PC-9 (cell line): ENCODE measurements at regions of chr14 and their contacts with region 1.

Region 1: GRCh38 chr14:49585803-49586672 is at the start of gene RPS29:
- DNase-seq: peak; percentile 95 to 97
- H3K4me3 ChIP-seq: peak within 1 kb of the TSS; percentile 97
- H3K27ac ChIP-seq: peak within 1 kb of the TSS; percentile 85
- H3K4me1 ChIP-seq: peaks cover 32% of the 10 kb centered on the region
- H3K27me3 ChIP-seq: no peaks in the 10 kb centered on the region
- CTCF ChIP-seq: no peak
- total RNA-seq, gene RPS29: 1,018 and 1,294 TPM in 2 replicates

Region 2: DNA sequence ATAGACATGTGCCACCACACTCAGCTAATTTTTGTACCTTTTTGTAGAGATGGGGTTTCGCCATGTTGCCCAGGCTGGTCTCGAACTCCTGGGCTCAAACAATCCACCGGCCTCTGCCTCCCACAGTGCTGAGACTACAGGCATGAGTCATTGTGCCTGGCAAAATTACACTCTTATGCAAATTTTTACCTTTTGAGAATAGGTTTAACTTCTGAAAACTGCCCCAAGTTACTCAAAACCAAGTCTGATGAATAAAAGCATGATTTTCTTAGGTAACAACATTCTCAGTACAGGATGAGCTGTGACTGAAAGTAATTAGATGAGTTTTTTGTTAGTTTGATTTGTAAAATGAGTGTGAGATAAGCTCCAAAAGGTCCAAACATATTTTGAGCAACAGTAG is 165.8 kb before region 1 on chr14:
- CTCF ChIA-PET with region 1: no interaction called
- POLR2A ChIA-PET with region 1: no interaction called
- intact Hi-C with region 1: no loop called
- DNase-seq: no peak
- H3K4me3 ChIP-seq: no peak overlapping the region
- H3K27ac ChIP-seq: no peak overlapping the region
- H3K4me1 ChIP-seq: no peaks in the 10 kb centered on the region
- H3K27me3 ChIP-seq: no peaks in the 10 kb centered on the region
- CTCF ChIP-seq: no peak

Region 3: DNA sequence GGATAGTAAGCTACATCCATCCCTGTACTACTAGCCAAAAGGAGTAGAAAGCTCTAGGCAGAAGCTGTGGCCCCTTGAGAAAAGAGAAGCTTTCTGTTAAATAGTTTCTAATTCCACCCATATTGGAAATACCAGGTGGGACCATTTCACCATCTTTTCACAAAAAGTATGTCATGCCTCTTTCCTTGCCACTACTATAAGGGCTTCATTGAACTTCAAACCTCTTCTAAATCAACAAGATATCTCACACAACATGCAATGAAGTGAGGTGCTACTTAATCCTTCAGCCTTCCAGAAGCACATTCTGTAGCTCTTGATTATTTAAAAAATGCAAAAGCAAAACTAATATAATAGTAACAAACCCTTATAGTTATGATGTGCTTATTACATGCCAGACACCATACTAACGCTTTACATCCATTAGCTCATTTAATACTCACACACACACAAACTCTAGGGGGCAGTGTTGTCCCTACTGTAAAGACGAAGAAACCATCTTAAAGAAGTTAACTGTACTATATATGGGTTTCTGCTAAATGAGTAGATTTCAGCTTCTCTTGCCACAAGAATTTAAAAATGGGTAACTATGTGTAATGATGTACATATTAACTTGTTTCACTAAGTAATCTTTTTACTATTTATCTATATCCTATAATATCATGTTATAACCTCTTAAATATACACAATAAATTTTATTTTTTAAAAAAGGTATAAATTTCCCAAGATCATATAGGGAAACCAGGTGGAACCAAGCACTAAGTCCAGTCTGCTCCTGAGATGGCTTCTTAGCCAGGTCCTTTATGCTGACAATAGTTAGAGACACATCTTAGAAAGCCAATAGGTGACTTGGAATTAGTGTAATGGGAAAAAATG is 124.3 kb before region 1 on chr14:
- CTCF ChIA-PET with region 1: interaction called, 6 read pairs
- POLR2A ChIA-PET with region 1: no interaction called
- intact Hi-C with region 1: loop called (anchors 10 kb)
- DNase-seq: peak; percentile 43 to 67
- H3K4me3 ChIP-seq: no peak overlapping the region
- H3K27ac ChIP-seq: no peak overlapping the region
- H3K4me1 ChIP-seq: no peaks in the 10 kb centered on the region
- H3K27me3 ChIP-seq: no peaks in the 10 kb centered on the region
- CTCF ChIP-seq: peak; percentile 84

Region 4: GRCh38 chr14:49505041-49505766 is 80.8 kb before region 1 on chr14:
- CTCF ChIA-PET with region 1: no interaction called
- POLR2A ChIA-PET with region 1: no interaction called
- intact Hi-C with region 1: loop called (anchors 10 kb)
- DNase-seq: peak; percentile 77 to 99
- H3K4me3 ChIP-seq: no peak overlapping the region
- H3K27ac ChIP-seq: peak overlapping the region; percentile 90
- H3K4me1 ChIP-seq: peaks cover 31% of the 10 kb centered on the region
- H3K27me3 ChIP-seq: no peaks in the 10 kb centered on the region
- CTCF ChIP-seq: no peak

Region 5: DNA sequence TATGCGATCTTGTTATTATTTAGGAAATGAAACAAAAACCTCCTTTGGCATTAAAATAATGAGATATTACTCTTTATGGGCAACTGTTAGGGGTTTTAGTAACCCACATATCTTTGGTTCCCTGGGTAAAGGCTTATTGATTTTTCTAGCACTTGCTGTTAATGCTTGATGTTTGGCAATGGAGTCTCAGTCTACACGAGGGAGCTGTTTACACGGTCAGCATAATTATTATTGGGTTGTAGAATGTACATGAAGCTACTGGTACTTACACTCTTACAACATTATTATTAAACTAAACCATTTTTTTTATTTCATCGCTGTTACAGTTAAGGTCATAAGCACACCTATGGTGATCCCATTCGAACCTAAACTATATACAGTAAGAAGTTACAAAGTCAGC is 12.0 kb before region 1 on chr14:
- CTCF ChIA-PET with region 1: no interaction called
- POLR2A ChIA-PET with region 1: interaction called, 27 read pairs
- intact Hi-C with region 1: no loop called
- DNase-seq: no peak
- H3K4me3 ChIP-seq: no peak overlapping the region
- H3K27ac ChIP-seq: no peak overlapping the region
- H3K4me1 ChIP-seq: no peaks in the 10 kb centered on the region
- H3K27me3 ChIP-seq: no peaks in the 10 kb centered on the region
- CTCF ChIP-seq: no peak

Region 6: GRCh38 chr14:49620182-49621113 is 34.4 kb after region 1 on chr14 and contains the starts of genes MGAT2 and RPL36AL:
- CTCF ChIA-PET with region 1: interaction called, 3 read pairs
- POLR2A ChIA-PET with region 1: interaction called, 4 read pairs
- intact Hi-C with region 1: loop called (anchors 5 kb)
- DNase-seq: peak; percentile 92 to 98
- H3K4me3 ChIP-seq: peak within 1 kb of the TSS; percentile 100
- H3K27ac ChIP-seq: peak within 1 kb of the TSS; percentile 96
- H3K4me1 ChIP-seq: peaks cover 61% of the 10 kb centered on the region
- H3K27me3 ChIP-seq: no peaks in the 10 kb centered on the region
- CTCF ChIP-seq: no peak
- total RNA-seq, gene MGAT2: 18.9 and 22.0 TPM in 2 replicates
- total RNA-seq, gene RPL36AL: 120 and 151 TPM in 2 replicates